ENCODE measurements at regions of chr5 and their contacts with region 1.

Region 1: GRCh38 chr5:52893105-52893504 is 96.0 kb upstream of the ITGA2 start:
- DNase-seq: no peak
- ATAC-seq: peak; percentile 52
- H3K4me3 ChIP-seq: no peak overlapping the region
- H3K27ac ChIP-seq: no peak overlapping the region
- H3K4me1 ChIP-seq: peaks cover 12 to 23% of the 10 kb centered on the region in 2 donors
- H3K27me3 ChIP-seq: no peaks in the 10 kb centered on the region

Region 2: GRCh38 chr5:52799983-52800393 is 93.1 kb before region 1 on chr5:
- intact Hi-C with region 1: loop called in 1 of 2 experiments (anchors 10 kb)
- DNase-seq: peak; percentile 97 to 99
- ATAC-seq: peak; percentile 96
- H3K4me3 ChIP-seq: peak overlapping the region; percentile 90
- H3K27ac ChIP-seq: peak overlapping the region; percentile 58 to 81
- H3K4me1 ChIP-seq: peaks cover 4 to 6% of the 10 kb centered on the region in 2 donors
- H3K27me3 ChIP-seq: no peaks in the 10 kb centered on the region

Region 3: GRCh38 chr5:52840277-52841050 is 52.6 kb before region 1 on chr5:
- intact Hi-C with region 1: loop called in 1 of 2 experiments (anchors 10 kb)
- DNase-seq: no peak
- ATAC-seq: peak; percentile 56
- H3K4me3 ChIP-seq: peak overlapping the region in 1 of 2 donors; percentile 56
- H3K27ac ChIP-seq: peak overlapping the region; percentile 43 to 94
- H3K4me1 ChIP-seq: peaks cover 1 to 8% of the 10 kb centered on the region in 2 donors
- H3K27me3 ChIP-seq: no peaks in the 10 kb centered on the region

Region 4: DNA sequence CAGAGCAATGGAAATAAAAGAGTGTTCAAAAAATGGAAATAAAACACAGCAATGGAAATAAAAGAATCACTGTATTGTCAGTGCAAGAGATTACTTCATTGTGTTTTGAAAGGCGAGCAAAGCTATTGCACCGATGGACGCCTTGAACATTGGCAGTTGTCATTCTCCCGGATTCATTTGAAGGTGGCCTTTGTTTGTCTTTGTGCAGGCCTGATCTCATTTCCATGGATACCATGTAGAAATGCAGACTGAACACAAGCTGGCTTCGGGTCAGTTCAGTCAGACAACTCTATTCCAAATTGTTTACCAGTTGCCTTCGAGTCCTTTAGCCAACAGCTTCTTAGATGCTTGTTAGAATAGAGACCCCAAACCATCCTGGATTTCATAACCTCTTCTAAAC is 104.3 kb after region 1 on chr5:
- intact Hi-C with region 1: no loop called
- DNase-seq: no peak
- ATAC-seq: no peak
- H3K4me3 ChIP-seq: no peak overlapping the region
- H3K27ac ChIP-seq: no peak overlapping the region
- H3K4me1 ChIP-seq: no peaks in the 10 kb centered on the region
- H3K27me3 ChIP-seq: no peaks in the 10 kb centered on the region